Activated CD4-positive, alpha-beta T cell treated with anti-CD3 and anti-CD28 coated beads for 36 hours (primary cell): ENCODE measurements at regions of chr2 and their contacts with region 1.

Region 1: DNA sequence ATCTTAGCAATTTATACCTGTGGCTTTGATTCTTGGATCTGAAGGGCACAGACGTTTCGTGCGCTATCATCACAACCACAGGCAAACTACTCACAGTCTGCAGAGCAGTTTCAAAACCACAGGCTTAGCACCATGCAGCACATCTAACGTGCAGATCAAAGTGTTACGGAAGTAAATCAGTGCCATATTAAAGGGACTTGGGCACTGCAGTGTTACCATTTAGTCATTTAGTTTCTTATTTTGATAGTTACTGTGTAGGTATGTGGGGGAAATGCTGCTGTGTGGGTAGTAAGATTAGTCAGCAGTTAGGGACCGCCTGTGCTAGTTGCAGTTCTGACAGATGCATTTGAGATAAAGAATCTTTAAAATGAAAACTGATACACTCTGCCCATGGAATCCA is 384.0 kb downstream of the NBAS start:
- DNase-seq: peak; percentile 84
- ATAC-seq: peak; percentile 94
- H3K4me3 Mint-ChIP-seq: no peak overlapping the region
- H3K27ac Mint-ChIP-seq: peak overlapping the region; percentile 47
- H3K4me1 Mint-ChIP-seq: peaks cover 50% of the 10 kb centered on the region
- H3K27me3 Mint-ChIP-seq: peaks cover 28% of the 10 kb centered on the region

Region 2: GRCh38 chr2:14903709-14904374 is 273.3 kb before region 1 on chr2:
- CTCF ChIA-PET with region 1: no interaction called
- POLR2A ChIA-PET with region 1: no interaction called
- intact Hi-C with region 1: loop called (anchors 1 to 10 kb)
- DNase-seq: peak; percentile 79
- ATAC-seq: peak; percentile 91
- H3K4me3 Mint-ChIP-seq: no peak overlapping the region
- H3K27ac Mint-ChIP-seq: no peak overlapping the region
- H3K4me1 Mint-ChIP-seq: no peaks in the 10 kb centered on the region
- H3K27me3 Mint-ChIP-seq: no peaks in the 10 kb centered on the region

Region 3: DNA sequence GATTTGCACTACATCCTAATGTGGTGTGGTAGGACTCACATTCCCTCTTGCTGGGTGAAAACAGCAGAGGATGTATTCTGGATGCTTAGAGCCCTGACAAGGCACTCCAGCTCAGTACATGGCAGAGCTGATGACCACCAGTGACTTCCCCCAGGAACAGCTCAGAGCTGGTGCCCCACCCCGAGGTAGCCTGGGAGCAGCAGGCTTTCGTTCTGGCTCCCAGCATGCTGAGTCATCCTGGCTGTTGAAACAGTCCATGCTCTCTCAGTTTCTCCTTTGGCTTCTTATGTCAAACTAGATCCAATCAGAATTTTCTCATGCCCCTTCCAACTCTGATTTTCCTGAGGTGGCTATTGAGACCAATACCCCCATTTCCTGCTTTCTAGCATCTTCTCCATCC is 54.2 kb before region 1 on chr2:
- CTCF ChIA-PET with region 1: no interaction called
- POLR2A ChIA-PET with region 1: no interaction called
- intact Hi-C with region 1: no loop called
- DNase-seq: no peak
- ATAC-seq: no peak
- H3K4me3 Mint-ChIP-seq: no peak overlapping the region
- H3K27ac Mint-ChIP-seq: no peak overlapping the region
- H3K4me1 Mint-ChIP-seq: peaks cover 10% of the 10 kb centered on the region
- H3K27me3 Mint-ChIP-seq: no peaks in the 10 kb centered on the region

Region 4: DNA sequence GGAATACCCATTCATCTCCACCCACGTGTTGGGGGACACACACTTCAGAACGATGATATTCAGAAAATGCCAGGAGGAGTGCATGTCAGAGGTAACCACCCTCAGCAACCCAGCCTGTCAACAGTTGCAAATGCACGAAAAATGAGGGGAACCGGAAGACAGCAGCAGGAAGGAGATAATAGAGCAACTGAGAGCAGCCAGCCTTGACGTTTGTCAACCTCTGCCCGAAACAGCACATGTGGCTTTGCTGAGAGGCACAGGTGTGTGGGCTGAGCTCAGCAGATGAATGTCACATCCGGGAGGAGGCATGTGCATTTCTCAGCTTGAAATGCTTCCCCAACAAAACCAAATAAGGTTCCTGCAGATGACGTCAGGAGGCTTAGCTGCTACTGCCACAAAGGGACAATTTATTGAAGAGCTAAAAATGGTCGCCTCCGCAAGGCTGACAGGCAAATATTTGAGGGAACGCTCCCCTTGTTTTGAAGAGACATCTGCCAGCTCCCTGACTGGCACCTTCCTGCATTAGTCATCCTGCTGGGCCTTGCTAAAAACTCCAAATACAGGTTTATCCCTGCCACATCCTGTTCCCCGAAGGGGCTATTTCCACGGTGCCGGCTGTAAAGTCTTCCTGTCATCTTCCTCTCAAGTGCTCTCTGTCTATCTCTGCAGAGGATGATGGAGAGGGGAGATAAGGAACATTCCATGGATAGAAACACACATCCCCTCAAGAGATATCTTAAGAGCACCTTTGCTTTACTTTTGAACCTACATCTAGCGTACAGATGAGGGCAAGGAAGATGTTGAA is 34.8 kb before region 1 on chr2:
- CTCF ChIA-PET with region 1: no interaction called
- POLR2A ChIA-PET with region 1: interaction called, 4 read pairs
- intact Hi-C with region 1: loop called (anchors 1 kb)
- DNase-seq: peak; percentile 89
- ATAC-seq: peak; percentile 95
- H3K4me3 Mint-ChIP-seq: peak overlapping the region; percentile 35
- H3K27ac Mint-ChIP-seq: peak overlapping the region; percentile 93
- H3K4me1 Mint-ChIP-seq: peaks cover 26% of the 10 kb centered on the region
- H3K27me3 Mint-ChIP-seq: peaks cover 3% of the 10 kb centered on the region

Region 5: DNA sequence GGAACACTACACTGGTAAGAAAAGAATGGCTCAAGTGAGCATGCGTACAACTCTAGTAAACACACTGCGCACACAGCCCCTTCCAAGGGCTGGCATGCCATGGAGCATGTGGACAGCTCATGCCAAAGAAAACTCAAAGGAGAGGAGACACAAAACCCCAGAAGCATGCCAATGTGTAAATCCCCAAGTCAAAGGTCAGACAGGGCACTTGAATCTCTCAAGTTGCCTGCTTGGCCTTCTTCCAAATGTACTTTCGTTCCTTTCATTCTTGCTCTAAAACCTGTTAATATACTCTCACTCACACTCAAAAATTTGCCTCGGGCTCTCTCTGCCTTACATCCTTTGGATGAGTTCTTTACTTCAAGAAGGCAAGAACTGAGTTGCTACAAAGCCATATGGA is 18.7 kb after region 1 on chr2:
- CTCF ChIA-PET with region 1: no interaction called
- POLR2A ChIA-PET with region 1: no interaction called
- intact Hi-C with region 1: no loop called
- DNase-seq: no peak
- ATAC-seq: no peak
- H3K4me3 Mint-ChIP-seq: no peak overlapping the region
- H3K27ac Mint-ChIP-seq: no peak overlapping the region
- H3K4me1 Mint-ChIP-seq: peaks cover 4% of the 10 kb centered on the region
- H3K27me3 Mint-ChIP-seq: no peaks in the 10 kb centered on the region

Region 6: GRCh38 chr2:15560988-15561573 is 384.0 kb after region 1 on chr2 and contains the start of gene NBAS:
- CTCF ChIA-PET with region 1: no interaction called
- POLR2A ChIA-PET with region 1: interaction called, 4 read pairs
- intact Hi-C with region 1: loop called (anchors 5 kb)
- DNase-seq: peak; percentile 90
- ATAC-seq: peak; percentile 80
- H3K4me3 Mint-ChIP-seq: peak within 1 kb of the TSS; percentile 96
- H3K27ac Mint-ChIP-seq: peak within 1 kb of the TSS; percentile 97
- H3K4me1 Mint-ChIP-seq: peaks cover 34% of the 10 kb centered on the region
- H3K27me3 Mint-ChIP-seq: peaks cover 2% of the 10 kb centered on the region
- total RNA-seq, gene NBAS: 38.1 to 44.3 TPM

Region 7: GRCh38 chr2:15965564-15966019 is 788.5 kb after region 1 on chr2:
- CTCF ChIA-PET with region 1: no interaction called
- POLR2A ChIA-PET with region 1: no interaction called
- intact Hi-C with region 1: loop called in 1 of 2 experiments (anchors 10 kb)
- DNase-seq: peak; percentile 80
- ATAC-seq: peak; percentile 67
- H3K4me3 Mint-ChIP-seq: no peak overlapping the region
- H3K27ac Mint-ChIP-seq: peak overlapping the region; percentile 65
- H3K4me1 Mint-ChIP-seq: peaks cover 52% of the 10 kb centered on the region
- H3K27me3 Mint-ChIP-seq: peaks cover 2% of the 10 kb centered on the region